ENCODE measurements at regions of chr6 and their contacts with region 1.

Region 1: GRCh38 chr6:157563611-157564284 is 182.8 kb downstream of the ZDHHC14 start:
- DNase-seq: peak; percentile 78
- H3K4me3 Mint-ChIP-seq: peak overlapping the region; percentile 35
- H3K27ac Mint-ChIP-seq: no peak overlapping the region
- H3K4me1 Mint-ChIP-seq: peaks cover 34% of the 10 kb centered on the region
- H3K27me3 Mint-ChIP-seq: peaks cover 7% of the 10 kb centered on the region

Region 2: GRCh38 chr6:157451937-157452495 is 111.7 kb before region 1 on chr6:
- intact Hi-C with region 1: no loop called
- DNase-seq: no peak
- H3K4me3 Mint-ChIP-seq: no peak overlapping the region
- H3K27ac Mint-ChIP-seq: no peak overlapping the region
- H3K4me1 Mint-ChIP-seq: peaks cover 21% of the 10 kb centered on the region
- H3K27me3 Mint-ChIP-seq: no peaks in the 10 kb centered on the region

Region 3: GRCh38 chr6:157527471-157527907 is 36.3 kb before region 1 on chr6:
- intact Hi-C with region 1: loop called (anchors 5 kb)
- DNase-seq: peak; percentile 88
- H3K4me3 Mint-ChIP-seq: peak overlapping the region; percentile 43
- H3K27ac Mint-ChIP-seq: peak overlapping the region; percentile 77
- H3K4me1 Mint-ChIP-seq: peaks cover 38% of the 10 kb centered on the region
- H3K27me3 Mint-ChIP-seq: no peaks in the 10 kb centered on the region

Measured in activated CD4-positive, alpha-beta T cell treated with anti-CD3 and anti-CD28 coated beads, Interleukin-2, amount 10 ng/mL, durations not matched to agents 24 days and 14 days (primary cell).